ENCODE measurements at regions of chr18 and their contacts with region 1.

Region 1: DNA sequence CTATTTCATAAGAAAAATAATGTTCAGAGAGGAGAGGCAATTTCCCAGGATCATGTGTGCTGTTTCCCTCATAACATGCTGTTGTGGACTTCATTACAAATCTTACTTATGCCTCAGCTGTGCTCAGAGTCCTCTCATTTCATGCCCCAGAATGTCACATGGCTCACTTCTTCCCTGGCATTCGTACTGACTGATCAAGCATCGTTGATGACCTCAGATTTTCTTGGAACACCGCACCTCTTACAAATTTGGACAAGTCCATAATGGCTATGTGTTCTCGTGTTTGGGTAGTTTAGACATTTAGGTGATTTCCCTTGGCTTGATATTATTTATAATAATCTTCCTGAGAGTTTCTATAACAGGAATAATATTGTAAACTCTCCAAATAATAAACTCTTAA is 32.9 kb downstream of the SERPINB7 start:
- DNase-seq: no peak
- H3K4me3 ChIP-seq: no peak overlapping the region
- H3K27ac ChIP-seq: no peak overlapping the region
- H3K4me1 ChIP-seq: no peaks in the 10 kb centered on the region
- H3K27me3 ChIP-seq: no peaks in the 10 kb centered on the region
- CTCF ChIP-seq: no peak
- EP300 ChIP-seq: no peak
- POLR2A ChIP-seq: no peak

Region 2: DNA sequence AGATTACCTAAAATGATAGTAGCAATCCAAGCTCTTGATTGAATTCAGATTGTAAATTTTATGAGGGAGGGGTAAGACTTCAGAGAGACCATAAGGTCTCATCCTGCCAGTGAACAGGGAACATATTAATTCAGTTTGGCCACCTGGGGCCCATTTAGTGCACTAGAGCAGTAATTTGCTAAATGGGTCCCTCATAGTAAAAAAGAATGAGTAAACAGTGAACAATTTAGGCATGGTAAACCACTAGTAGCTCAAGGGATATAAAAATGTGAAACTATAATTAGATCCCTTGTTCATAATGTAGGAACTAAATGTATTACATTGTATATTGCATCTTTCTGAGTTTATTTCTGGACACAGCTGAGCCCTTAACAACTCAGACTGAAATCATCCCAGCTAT is 1097.7 kb before region 1 on chr18:
- in situ Hi-C with region 1: no loop called
- intact Hi-C with region 1: no loop called
- DNase-seq: no peak
- H3K4me3 ChIP-seq: no peak overlapping the region
- H3K27ac ChIP-seq: no peak overlapping the region
- H3K4me1 ChIP-seq: peaks cover 0 to 21% (median 4%) of the 10 kb centered on the region in 4 donors
- H3K27me3 ChIP-seq: no peaks in the 10 kb centered on the region
- CTCF ChIP-seq: no peak
- EP300 ChIP-seq: no peak
- POLR2A ChIP-seq: no peak

Region 3: GRCh38 chr18:63869374-63869773 is 61.2 kb after region 1 on chr18:
- in situ Hi-C with region 1: loop called in 1 of 4 experiments (anchors 10 kb)
- intact Hi-C with region 1: no loop called
- DNase-seq: no peak
- H3K4me3 ChIP-seq: no peak overlapping the region
- H3K27ac ChIP-seq: no peak overlapping the region
- H3K4me1 ChIP-seq: no peaks in the 10 kb centered on the region
- H3K27me3 ChIP-seq: no peaks in the 10 kb centered on the region
- CTCF ChIP-seq: no peak
- EP300 ChIP-seq: no peak
- POLR2A ChIP-seq: no peak

Measured in transverse colon (tissue), 4 donors.